Heart left ventricle (tissue), 16 donors: ENCODE measurements at regions of chr18 and their contacts with region 1.

Region 1: DNA sequence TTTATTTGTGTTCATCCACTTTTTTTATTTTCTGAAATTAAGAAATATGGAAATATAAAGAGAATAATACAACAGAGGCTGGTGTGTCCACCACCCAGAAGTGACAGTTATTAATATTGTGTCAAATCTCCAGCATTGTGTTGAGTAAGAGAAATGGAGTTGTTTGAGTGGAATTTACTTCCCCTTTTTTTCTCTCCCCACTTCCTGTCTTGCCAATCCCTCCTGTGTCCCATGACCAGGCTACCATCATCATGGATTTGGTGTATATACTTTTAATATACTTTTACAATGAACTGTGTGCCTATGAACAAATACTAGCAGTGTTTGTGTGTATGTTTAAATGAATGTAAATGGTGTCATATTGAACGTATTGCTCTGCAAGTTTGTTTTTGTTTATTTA is 276.9 kb upstream of the SKOR2 start:
- DNase-seq: no peak
- ATAC-seq: no peak
- H3K4me3 ChIP-seq: no peak overlapping the region
- H3K27ac ChIP-seq: no peak overlapping the region
- H3K4me1 ChIP-seq: no peaks in the 10 kb centered on the region
- H3K27me3 ChIP-seq: peaks cover 0 to 52% (median 21%) of the 10 kb centered on the region in 9 donors
- CTCF ChIP-seq: no peak
- POLR2A ChIP-seq: no peak

Region 2: GRCh38 chr18:47582093-47582492 is 53.8 kb after region 1 on chr18:
- intact Hi-C with region 1: loop called in 1 of 10 experiments (anchors 10 kb)
- DNase-seq: no peak
- ATAC-seq: no peak
- H3K4me3 ChIP-seq: no peak overlapping the region
- H3K27ac ChIP-seq: no peak overlapping the region
- H3K4me1 ChIP-seq: no peaks in the 10 kb centered on the region
- H3K27me3 ChIP-seq: peaks cover 0 to 21% (median 6%) of the 10 kb centered on the region in 9 donors
- CTCF ChIP-seq: no peak
- POLR2A ChIP-seq: no peak